ENCODE measurements at regions of chr7 and their contacts with region 1.

Region 1: GRCh38 chr7:24381894-24382505 is 98.0 kb downstream of the NPY start:
- DNase-seq: peak in 1 of 2 experiments; percentile 19
- H3K4me3 ChIP-seq: no peak overlapping the region
- H3K4me3 Mint-ChIP-seq: no peak overlapping the region
- H3K27ac Mint-ChIP-seq: no peak overlapping the region
- H3K4me1 ChIP-seq: no peaks in the 10 kb centered on the region
- H3K4me1 Mint-ChIP-seq: no peaks in the 10 kb centered on the region
- H3K27me3 ChIP-seq: no peaks in the 10 kb centered on the region
- H3K27me3 Mint-ChIP-seq: peaks cover 2% of the 10 kb centered on the region
- CTCF ChIP-seq: peak; percentile 60 to 65

Region 2: GRCh38 chr7:23863209-23863798 is 518.7 kb before region 1 on chr7:
- CTCF ChIA-PET with region 1: no interaction called
- POLR2A ChIA-PET with region 1: no interaction called
- intact Hi-C with region 1: loop called (anchors 2 kb)
- DNase-seq: peak in 1 of 2 experiments; percentile 44
- H3K4me3 ChIP-seq: no peak overlapping the region
- H3K4me3 Mint-ChIP-seq: no peak overlapping the region
- H3K27ac Mint-ChIP-seq: no peak overlapping the region
- H3K4me1 ChIP-seq: no peaks in the 10 kb centered on the region
- H3K4me1 Mint-ChIP-seq: no peaks in the 10 kb centered on the region
- H3K27me3 ChIP-seq: no peaks in the 10 kb centered on the region
- H3K27me3 Mint-ChIP-seq: peaks cover 7% of the 10 kb centered on the region
- CTCF ChIP-seq: peak; percentile 62 to 83

Region 3: GRCh38 chr7:24129597-24129996 is 252.4 kb before region 1 on chr7:
- CTCF ChIA-PET with region 1: no interaction called
- POLR2A ChIA-PET with region 1: no interaction called
- intact Hi-C with region 1: no loop called
- DNase-seq: no peak
- H3K4me3 ChIP-seq: no peak overlapping the region
- H3K4me3 Mint-ChIP-seq: no peak overlapping the region
- H3K27ac Mint-ChIP-seq: no peak overlapping the region
- H3K4me1 ChIP-seq: no peaks in the 10 kb centered on the region
- H3K4me1 Mint-ChIP-seq: no peaks in the 10 kb centered on the region
- H3K27me3 ChIP-seq: no peaks in the 10 kb centered on the region; the same call in 1 of the 2 replicates
- H3K27me3 Mint-ChIP-seq: peaks cover 10% of the 10 kb centered on the region
- CTCF ChIP-seq: no peak

Region 4: GRCh38 chr7:24290004-24290641 is 91.9 kb before region 1 on chr7:
- CTCF ChIA-PET with region 1: no interaction called
- POLR2A ChIA-PET with region 1: no interaction called
- intact Hi-C with region 1: loop called (anchors 1 kb)
- DNase-seq: peak; percentile 62 to 66
- H3K4me3 ChIP-seq: no peak overlapping the region
- H3K4me3 Mint-ChIP-seq: no peak overlapping the region
- H3K27ac Mint-ChIP-seq: no peak overlapping the region
- H3K4me1 ChIP-seq: no peaks in the 10 kb centered on the region
- H3K4me1 Mint-ChIP-seq: peaks cover 8% of the 10 kb centered on the region
- H3K27me3 ChIP-seq: no peaks in the 10 kb centered on the region; the same call in 1 of the 2 replicates
- H3K27me3 Mint-ChIP-seq: peaks cover 17% of the 10 kb centered on the region
- CTCF ChIP-seq: peak; percentile 60 to 68

Region 5: GRCh38 chr7:24318326-24318725 is 63.7 kb before region 1 on chr7:
- CTCF ChIA-PET with region 1: interaction called, 10 read pairs
- POLR2A ChIA-PET with region 1: no interaction called
- intact Hi-C with region 1: no loop called
- DNase-seq: peak; percentile 41 to 45
- H3K4me3 ChIP-seq: no peak overlapping the region
- H3K4me3 Mint-ChIP-seq: no peak overlapping the region
- H3K27ac Mint-ChIP-seq: no peak overlapping the region
- H3K4me1 ChIP-seq: no peaks in the 10 kb centered on the region
- H3K4me1 Mint-ChIP-seq: no peaks in the 10 kb centered on the region
- H3K27me3 ChIP-seq: no peaks in the 10 kb centered on the region
- H3K27me3 Mint-ChIP-seq: peaks cover 24% of the 10 kb centered on the region
- CTCF ChIP-seq: peak; percentile 40 to 77